ENCODE measurements at regions of chr1 and their contacts with region 1.

Region 1: DNA sequence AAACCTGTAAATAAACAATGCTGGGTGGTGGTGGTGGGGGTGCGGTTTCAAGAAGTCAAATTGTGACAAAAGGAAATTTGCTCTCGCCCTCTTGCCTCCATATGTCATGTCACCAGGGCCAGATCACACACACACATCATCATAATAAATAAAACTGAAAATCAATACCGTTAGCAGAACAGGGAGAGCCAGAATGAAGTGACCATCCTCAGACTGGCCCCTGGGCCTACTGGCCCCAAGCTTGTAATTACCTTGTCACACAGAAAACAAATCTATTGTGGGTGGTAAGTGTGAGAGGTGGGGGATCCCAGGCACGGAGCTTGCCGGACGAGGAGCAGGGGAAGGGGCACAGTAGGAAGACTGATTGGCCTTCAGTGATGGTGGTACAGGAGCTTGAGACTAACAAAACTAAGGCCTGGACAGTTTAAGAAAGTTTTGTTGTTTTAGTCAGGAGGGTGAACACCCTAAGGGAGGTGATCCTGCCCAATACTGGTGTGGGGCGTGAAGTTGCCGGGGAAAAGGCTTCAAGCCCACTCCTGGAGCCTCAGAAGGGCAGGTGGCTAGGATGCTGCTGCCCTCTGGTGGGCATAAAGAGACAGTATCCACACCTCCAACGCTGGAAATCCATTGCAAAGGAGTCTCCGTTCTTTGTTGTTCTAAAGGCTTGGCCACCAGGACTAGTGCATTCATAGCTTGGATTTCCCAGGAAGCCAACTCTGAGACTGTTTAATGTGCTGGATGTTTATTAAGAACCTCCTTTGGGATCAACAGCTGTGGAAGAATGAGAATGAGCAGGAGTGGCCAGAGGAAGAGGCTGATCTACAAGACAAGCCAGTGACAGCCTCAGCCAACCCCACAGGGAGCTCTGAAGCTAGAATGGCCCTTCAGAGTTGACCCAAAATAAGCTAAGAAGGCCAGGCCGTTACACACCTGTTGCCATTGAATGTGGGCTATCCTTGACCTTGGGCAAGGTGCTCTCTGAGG is 8.1 kb upstream of the C1orf216 start:
- DNase-seq: peak; percentile 44 to 52
- ATAC-seq: peak; percentile 94 to 97
- H3K4me3 ChIP-seq: no peak overlapping the region
- H3K27ac ChIP-seq: no peak overlapping the region
- H3K4me1 ChIP-seq: no peaks in the 10 kb centered on the region
- CTCF ChIP-seq: peak; percentile 73
- EP300 ChIP-seq: no peak
- POLR2A ChIP-seq: no peak
- RAD21 ChIP-seq: peak; percentile 71 to 72

Region 2: GRCh38 chr1:35451125-35451528 is 275.6 kb before region 1 on chr1:
- CTCF ChIA-PET with region 1: interaction called, 33 read pairs
- POLR2A ChIA-PET with region 1: no interaction called
- DNase-seq: peak; percentile 43 to 61
- ATAC-seq: peak; percentile 94 to 98
- H3K4me3 ChIP-seq: no peak overlapping the region
- H3K27ac ChIP-seq: no peak overlapping the region
- H3K4me1 ChIP-seq: peaks cover 2% of the 10 kb centered on the region; the same call in 1 of the 3 replicates
- CTCF ChIP-seq: peak; percentile 62
- EP300 ChIP-seq: no peak
- POLR2A ChIP-seq: no peak
- RAD21 ChIP-seq: peak; percentile 61

Region 3: DNA sequence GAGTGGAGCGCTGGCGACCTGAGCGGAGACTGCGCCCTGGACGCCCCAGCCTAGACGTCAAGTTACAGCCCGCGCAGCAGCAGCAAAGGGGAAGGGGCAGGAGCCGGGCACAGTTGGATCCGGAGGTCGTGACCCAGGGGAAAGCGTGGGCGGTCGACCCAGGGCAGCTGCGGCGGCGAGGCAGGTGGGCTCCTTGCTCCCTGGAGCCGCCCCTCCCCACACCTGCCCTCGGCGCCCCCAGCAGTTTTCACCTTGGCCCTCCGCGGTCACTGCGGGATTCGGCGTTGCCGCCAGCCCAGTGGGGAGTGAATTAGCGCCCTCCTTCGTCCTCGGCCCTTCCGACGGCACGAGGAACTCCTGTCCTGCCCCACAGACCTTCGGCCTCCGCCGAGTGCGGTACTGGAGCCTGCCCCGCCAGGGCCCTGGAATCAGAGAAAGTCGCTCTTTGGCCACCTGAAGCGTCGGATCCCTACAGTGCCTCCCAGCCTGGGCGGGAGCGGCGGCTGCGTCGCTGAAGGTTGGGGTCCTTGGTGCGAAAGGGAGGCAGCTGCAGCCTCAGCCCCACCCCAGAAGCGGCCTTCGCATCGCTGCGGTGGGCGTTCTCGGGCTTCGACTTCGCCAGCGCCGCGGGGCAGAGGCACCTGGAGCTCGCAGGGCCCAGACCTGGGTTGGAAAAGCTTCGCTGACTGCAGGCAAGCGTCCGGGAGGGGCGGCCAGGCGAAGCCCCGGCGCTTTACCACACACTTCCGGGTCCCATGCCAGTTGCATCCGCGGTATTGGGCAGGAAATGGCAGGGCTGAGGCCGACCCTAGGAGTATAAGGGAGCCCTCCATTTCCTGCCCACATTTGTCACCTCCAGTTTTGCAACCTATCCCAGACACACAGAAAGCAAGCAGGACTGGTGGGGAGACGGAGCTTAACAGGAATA is 149.4 kb before region 1 on chr1:
- CTCF ChIA-PET with region 1: interaction called, 47 read pairs
- POLR2A ChIA-PET with region 1: no interaction called
- DNase-seq: no peak
- ATAC-seq: no peak
- H3K4me3 ChIP-seq: no peak overlapping the region
- H3K27ac ChIP-seq: no peak overlapping the region
- H3K4me1 ChIP-seq: no peaks in the 10 kb centered on the region
- CTCF ChIP-seq: no peak
- EP300 ChIP-seq: no peak
- POLR2A ChIP-seq: no peak
- RAD21 ChIP-seq: no peak

Region 4: DNA sequence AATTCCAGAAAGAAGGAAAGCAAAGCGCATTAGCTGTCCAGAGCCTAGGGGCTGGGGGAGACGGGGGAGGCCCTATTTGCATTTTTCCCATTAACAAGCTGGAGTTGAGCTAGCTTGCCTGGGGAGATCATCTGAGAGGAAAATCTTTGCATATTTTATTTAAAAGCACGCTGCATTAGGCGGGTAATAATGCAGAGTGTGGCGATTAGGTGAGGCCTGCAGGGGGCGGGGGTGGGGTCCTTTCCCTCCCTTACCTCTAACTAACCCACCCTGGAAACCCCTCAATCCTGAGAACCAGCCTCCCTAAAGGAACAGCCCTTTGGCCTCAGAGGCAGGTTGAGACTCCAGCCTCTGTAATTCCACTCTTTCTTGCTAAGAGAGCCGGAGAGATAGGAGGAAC is 24.2 kb before region 1 on chr1:
- CTCF ChIA-PET with region 1: interaction called, 10 read pairs
- POLR2A ChIA-PET with region 1: no interaction called
- DNase-seq: no peak
- ATAC-seq: no peak
- H3K4me3 ChIP-seq: no peak overlapping the region
- H3K27ac ChIP-seq: no peak overlapping the region
- H3K4me1 ChIP-seq: no peaks in the 10 kb centered on the region
- CTCF ChIP-seq: no peak
- EP300 ChIP-seq: no peak
- POLR2A ChIP-seq: no peak
- RAD21 ChIP-seq: no peak

Region 5: DNA sequence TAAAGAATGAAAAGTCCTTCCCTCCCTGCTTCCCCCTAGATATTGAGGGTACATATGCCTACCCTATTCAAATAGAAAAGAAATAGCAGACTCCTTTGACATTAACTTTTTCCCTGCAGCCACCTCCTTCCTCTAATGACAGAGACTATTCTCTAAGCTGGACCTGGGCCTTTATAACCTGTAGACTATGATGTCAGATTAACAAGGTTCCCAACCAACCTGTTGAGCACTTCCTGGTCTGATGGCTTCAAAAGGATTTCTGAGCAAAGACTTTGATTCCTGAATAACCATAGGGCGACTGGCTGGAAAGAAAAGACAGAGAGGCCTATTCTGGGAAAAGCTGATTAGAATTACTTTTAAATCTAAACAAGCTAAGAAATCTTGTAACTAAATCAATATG is 10.4 kb after region 1 on chr1:
- CTCF ChIA-PET with region 1: interaction called, 54 read pairs
- POLR2A ChIA-PET with region 1: no interaction called
- DNase-seq: no peak
- ATAC-seq: no peak
- H3K4me3 ChIP-seq: no peak overlapping the region
- H3K27ac ChIP-seq: no peak overlapping the region
- H3K4me1 ChIP-seq: no peaks in the 10 kb centered on the region
- CTCF ChIP-seq: no peak
- EP300 ChIP-seq: no peak
- POLR2A ChIP-seq: no peak
- RAD21 ChIP-seq: no peak

Region 6: GRCh38 chr1:35756064-35756463 is 29.3 kb after region 1 on chr1:
- CTCF ChIA-PET with region 1: interaction called, 13 read pairs
- POLR2A ChIA-PET with region 1: no interaction called
- DNase-seq: no peak
- ATAC-seq: no peak
- H3K4me3 ChIP-seq: no peak overlapping the region
- H3K27ac ChIP-seq: no peak overlapping the region
- H3K4me1 ChIP-seq: no peaks in the 10 kb centered on the region
- CTCF ChIP-seq: no peak
- EP300 ChIP-seq: no peak
- POLR2A ChIP-seq: no peak
- RAD21 ChIP-seq: no peak

Region 7: DNA sequence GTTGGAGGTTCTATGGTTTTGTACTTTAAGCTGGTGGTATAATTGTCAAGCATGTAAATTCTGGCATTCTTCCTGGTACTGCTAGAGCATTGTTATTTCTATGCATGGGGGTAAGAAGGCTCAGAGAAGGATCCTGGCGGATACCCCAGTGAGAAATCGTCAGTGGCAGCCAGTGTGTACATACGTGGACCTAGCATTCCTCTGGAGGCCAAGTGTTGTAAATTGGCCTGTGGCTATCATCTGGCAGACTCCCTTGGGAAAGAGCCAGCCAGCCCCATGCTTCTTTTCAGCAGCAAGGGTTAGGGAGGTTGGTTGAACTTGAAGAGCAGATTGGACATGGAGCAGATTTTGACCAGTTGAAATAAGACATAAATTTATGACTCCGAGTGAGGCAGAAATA is 199.0 kb after region 1 on chr1:
- CTCF ChIA-PET with region 1: no interaction called
- POLR2A ChIA-PET with region 1: no interaction called
- DNase-seq: no peak
- ATAC-seq: no peak
- H3K4me3 ChIP-seq: no peak overlapping the region
- H3K27ac ChIP-seq: no peak overlapping the region
- H3K4me1 ChIP-seq: peaks cover 4% of the 10 kb centered on the region; the same call in 2 of the 3 replicates
- CTCF ChIP-seq: no peak
- EP300 ChIP-seq: no peak
- POLR2A ChIP-seq: no peak
- RAD21 ChIP-seq: no peak